Right cardiac atrium (tissue), 5 donors: ENCODE measurements at regions of chr11 and their contacts with region 1.

Region 1: GRCh38 chr11:1837171-1838076 is 1.4 kb upstream of the TNNI2 start:
- DNase-seq: peak; percentile 73 to 89 (median 89)
- ATAC-seq: peak; percentile 32 to 55
- H3K4me3 ChIP-seq: no peak overlapping the region
- H3K27ac ChIP-seq: no peak overlapping the region
- H3K4me1 ChIP-seq: no peaks in the 10 kb centered on the region
- H3K27me3 ChIP-seq: no peaks in the 10 kb centered on the region

Region 2: GRCh38 chr11:1714973-1715885 is 122.2 kb before region 1 on chr11:
- intact Hi-C with region 1: no loop called
- DNase-seq: peak in 2 of 3 donors; percentile 30 to 57
- ATAC-seq: peak; percentile 69 to 77
- H3K4me3 ChIP-seq: no peak overlapping the region
- H3K27ac ChIP-seq: no peak overlapping the region
- H3K4me1 ChIP-seq: no peaks in the 10 kb centered on the region
- H3K27me3 ChIP-seq: no peaks in the 10 kb centered on the region

Region 3: GRCh38 chr11:1782831-1783724 is 54.3 kb before region 1 on chr11:
- intact Hi-C with region 1: no loop called
- DNase-seq: no peak
- ATAC-seq: no peak
- H3K4me3 ChIP-seq: no peak overlapping the region
- H3K27ac ChIP-seq: no peak overlapping the region
- H3K4me1 ChIP-seq: no peaks in the 10 kb centered on the region
- H3K27me3 ChIP-seq: no peaks in the 10 kb centered on the region

Region 4: GRCh38 chr11:1943977-1944376 is 106.6 kb after region 1 on chr11:
- intact Hi-C with region 1: loop called in 1 of 4 experiments (anchors 10 kb)
- DNase-seq: peak in 1 of 3 donors; percentile 40
- ATAC-seq: no peak
- H3K4me3 ChIP-seq: no peak overlapping the region
- H3K27ac ChIP-seq: peak overlapping the region; percentile 16
- H3K4me1 ChIP-seq: no peaks in the 10 kb centered on the region
- H3K27me3 ChIP-seq: no peaks in the 10 kb centered on the region

Region 5: GRCh38 chr11:2208691-2209369 is 371.4 kb after region 1 on chr11:
- intact Hi-C with region 1: no loop called
- DNase-seq: peak in 1 of 3 donors; percentile 46
- ATAC-seq: peak; percentile 26 to 34
- H3K4me3 ChIP-seq: no peak overlapping the region
- H3K27ac ChIP-seq: no peak overlapping the region
- H3K4me1 ChIP-seq: no peaks in the 10 kb centered on the region
- H3K27me3 ChIP-seq: no peaks in the 10 kb centered on the region